PC-9 (cell line): ENCODE measurements at regions of chr3 and their contacts with region 1.

Region 1: DNA sequence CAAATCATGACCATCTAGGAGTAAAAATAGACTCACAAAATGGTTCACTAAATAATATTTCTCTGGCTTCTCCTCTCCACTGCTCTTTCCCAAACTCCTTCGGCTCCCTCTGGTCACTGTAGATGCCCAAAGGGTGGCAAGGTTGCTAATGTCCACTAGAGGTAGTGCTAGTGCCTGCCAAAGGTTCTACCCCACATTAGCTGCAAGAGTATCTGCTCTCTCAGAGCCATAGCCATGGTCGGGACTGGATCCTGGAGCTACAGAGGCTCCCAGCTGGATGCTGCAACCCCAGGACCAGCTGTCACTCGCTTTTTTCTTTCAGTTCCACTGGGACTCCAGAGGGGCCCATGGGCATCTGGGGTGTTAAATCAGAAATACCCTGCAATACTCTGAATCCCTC is 8.5 kb downstream of the HTR3D start:
- DNase-seq: peak in 1 of 2 experiments; percentile 44
- H3K4me3 ChIP-seq: no peak overlapping the region
- H3K27ac ChIP-seq: no peak overlapping the region
- H3K4me1 ChIP-seq: no peaks in the 10 kb centered on the region
- H3K27me3 ChIP-seq: no peaks in the 10 kb centered on the region
- CTCF ChIP-seq: peak; percentile 84

Region 2: DNA sequence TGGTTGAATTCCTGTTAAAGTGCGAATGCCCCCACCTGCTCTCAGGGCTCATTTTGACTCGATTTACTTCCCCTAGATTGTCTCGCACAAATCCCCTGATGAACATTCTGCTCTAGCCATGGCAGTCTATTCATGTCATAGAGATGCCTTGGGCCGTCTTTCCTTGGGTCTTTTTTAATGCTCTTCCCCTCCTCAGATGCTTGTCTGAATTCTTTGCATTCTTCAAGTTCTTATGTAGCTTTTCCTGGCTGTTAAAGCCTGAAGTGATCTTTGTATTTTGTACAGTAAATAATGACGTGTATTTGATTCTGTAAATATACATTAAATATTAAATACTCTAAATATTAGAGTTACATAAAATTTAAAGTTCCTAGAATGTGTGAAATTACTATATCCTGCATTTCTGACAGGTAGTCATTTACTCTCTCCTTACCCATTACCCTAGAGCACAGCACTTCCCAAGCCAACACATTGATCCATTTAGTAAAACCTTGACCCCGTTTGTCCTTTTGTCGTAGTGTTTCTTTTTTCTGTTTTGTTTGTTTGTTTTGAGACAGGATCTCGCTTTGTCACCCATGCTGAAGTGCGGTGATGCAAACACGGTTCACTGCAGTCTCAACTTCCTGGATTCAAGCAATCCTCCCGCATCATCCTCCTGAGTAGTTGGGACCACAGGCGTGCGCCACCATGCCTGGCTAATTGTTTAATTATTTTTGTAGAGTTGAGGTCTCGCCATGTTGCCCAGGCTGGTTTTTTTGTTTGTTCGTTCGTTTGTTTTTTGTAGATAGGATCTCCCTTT is 294.5 kb before region 1 on chr3:
- CTCF ChIA-PET with region 1: no interaction called
- POLR2A ChIA-PET with region 1: no interaction called
- intact Hi-C with region 1: no loop called
- DNase-seq: no peak
- H3K4me3 ChIP-seq: no peak overlapping the region
- H3K27ac ChIP-seq: no peak overlapping the region
- H3K4me1 ChIP-seq: no peaks in the 10 kb centered on the region
- H3K27me3 ChIP-seq: no peaks in the 10 kb centered on the region
- CTCF ChIP-seq: no peak

Region 3: GRCh38 chr3:184050217-184050847 is 10.3 kb after region 1 on chr3:
- CTCF ChIA-PET with region 1: interaction called, 24 read pairs
- POLR2A ChIA-PET with region 1: no interaction called
- intact Hi-C with region 1: no loop called
- DNase-seq: no peak
- H3K4me3 ChIP-seq: no peak overlapping the region
- H3K27ac ChIP-seq: no peak overlapping the region
- H3K4me1 ChIP-seq: no peaks in the 10 kb centered on the region
- H3K27me3 ChIP-seq: no peaks in the 10 kb centered on the region; the same call in 1 of the 2 replicates
- CTCF ChIP-seq: no peak

Region 4: DNA sequence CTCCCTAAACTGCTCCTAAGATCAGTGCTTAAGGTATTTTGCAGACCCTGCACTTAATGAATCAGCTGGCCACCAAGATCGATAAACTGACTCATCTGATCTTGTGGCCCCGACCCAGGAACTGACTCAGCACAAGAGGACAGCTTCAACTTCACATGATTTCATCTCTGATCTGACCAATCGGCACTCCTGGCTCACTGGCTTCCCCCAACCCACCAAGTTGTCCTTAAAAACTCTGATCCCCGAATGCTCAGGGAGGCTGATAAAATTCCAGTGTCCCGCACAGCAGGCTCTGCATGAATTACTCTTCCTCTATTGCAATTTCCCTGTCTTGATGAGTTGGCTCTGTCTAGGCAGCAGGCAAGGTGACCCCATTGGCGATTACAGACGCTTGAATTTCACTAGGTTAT is 70.3 kb after region 1 on chr3:
- CTCF ChIA-PET with region 1: no interaction called
- POLR2A ChIA-PET with region 1: interaction called, 11 read pairs
- intact Hi-C with region 1: loop called (anchors 5 kb)
- DNase-seq: peak in 1 of 2 experiments; percentile 84
- H3K4me3 ChIP-seq: peak overlapping the region; percentile 28; the same call in 1 of the 2 replicates
- H3K27ac ChIP-seq: peak overlapping the region; percentile 47
- H3K4me1 ChIP-seq: peaks cover 16% of the 10 kb centered on the region
- H3K27me3 ChIP-seq: no peaks in the 10 kb centered on the region
- CTCF ChIP-seq: no peak

Region 5: GRCh38 chr3:184117636-184118035 is 77.6 kb after region 1 on chr3:
- CTCF ChIA-PET with region 1: no interaction called
- POLR2A ChIA-PET with region 1: no interaction called
- intact Hi-C with region 1: loop called (anchors 5 kb)
- DNase-seq: no peak
- H3K4me3 ChIP-seq: no peak overlapping the region
- H3K27ac ChIP-seq: no peak overlapping the region
- H3K4me1 ChIP-seq: no peaks in the 10 kb centered on the region
- H3K27me3 ChIP-seq: no peaks in the 10 kb centered on the region
- CTCF ChIP-seq: 0 out of 2 replicates have a peak, but pooled peaks have one; percentile 20

Region 6: DNA sequence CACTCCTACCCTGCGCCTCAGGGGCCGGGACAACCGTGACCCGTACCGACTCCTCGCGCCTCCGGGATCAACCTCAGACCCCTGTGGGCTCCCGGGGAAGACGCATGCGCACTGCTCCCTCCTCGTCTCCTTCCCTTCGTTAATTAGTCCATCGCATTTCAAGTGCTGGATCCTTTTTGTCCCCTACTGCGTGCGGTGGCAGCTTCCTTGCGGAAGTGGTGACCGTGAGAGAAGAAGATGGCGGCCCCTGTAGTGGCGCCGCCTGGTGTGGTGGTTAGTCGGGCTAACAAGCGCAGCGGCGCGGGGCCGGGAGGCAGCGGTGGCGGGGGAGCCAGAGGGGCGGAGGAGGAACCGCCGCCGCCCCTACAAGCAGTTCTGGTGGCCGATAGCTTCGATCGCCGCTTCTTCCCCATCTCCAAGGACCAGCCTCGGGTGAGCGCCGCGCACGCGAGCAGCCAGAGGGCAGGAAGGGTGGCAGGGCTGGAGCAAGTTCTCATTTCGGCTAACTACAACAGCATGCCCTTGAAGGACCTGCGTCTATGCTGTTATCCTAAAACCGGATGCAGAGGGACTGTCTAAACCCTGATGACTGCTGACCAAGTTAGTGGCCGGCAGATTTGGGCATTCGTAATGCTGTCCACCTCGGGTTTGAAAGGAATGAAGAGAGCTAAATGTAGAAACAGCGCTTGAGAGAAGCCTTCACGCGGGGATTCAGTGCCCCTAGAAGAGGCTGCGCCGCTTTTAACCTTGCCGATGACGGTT is 95.3 kb after region 1 on chr3 and contains the start of gene EIF2B5:
- CTCF ChIA-PET with region 1: interaction called, 4 read pairs
- POLR2A ChIA-PET with region 1: no interaction called
- intact Hi-C with region 1: loop called (anchors 1 kb)
- DNase-seq: peak; percentile 87 to 88
- H3K4me3 ChIP-seq: peak within 1 kb of the TSS; percentile 80
- H3K27ac ChIP-seq: peak within 1 kb of the TSS; percentile 79
- H3K4me1 ChIP-seq: peaks cover 25% of the 10 kb centered on the region
- H3K27me3 ChIP-seq: no peaks in the 10 kb centered on the region
- CTCF ChIP-seq: peak; percentile 48
- total RNA-seq, gene EIF2B5: 45.7 and 54.1 TPM in 2 replicates

Region 7: DNA sequence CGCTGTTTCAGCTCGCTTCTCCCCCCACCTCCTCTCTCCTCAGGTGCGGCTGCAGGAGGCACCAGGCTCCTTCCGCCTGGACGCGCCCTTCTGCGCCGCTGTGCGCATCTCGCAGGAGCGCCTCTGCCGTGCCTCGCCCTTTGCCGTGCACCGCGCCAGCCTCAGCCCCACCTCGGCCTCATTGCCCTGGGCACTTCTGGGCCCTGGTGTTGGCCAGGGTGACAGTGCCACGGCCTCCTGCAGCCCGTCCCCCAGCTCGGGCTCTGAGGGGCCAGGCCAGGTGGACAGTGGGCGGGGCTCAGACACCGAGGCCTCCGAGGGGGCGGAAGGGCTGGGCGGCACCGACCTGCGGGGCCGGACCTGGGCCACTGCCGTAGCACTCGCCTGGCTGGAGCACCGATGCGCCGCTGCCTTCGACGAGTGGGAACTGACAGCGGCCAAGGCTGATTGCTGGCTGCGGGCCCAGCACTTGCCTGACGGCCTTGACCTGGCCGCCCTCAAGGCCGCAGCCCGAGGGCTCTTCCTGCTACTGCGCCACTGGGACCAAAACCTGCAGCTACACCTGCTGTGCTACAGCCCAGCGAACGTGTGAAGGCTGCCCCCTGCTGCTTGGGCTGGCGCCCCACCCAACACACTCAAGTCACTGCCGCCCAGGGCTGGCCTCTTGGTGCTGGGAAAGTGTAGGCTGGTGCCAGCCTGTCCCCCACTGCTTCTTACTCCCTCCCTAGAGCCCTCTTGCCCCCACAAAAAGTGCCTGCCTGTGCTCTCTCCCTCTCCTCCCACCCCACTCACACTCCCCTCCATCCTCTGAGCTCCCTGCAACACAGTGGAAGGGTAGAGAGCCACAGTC is 201.7 kb after region 1 on chr3:
- CTCF ChIA-PET with region 1: no interaction called
- POLR2A ChIA-PET with region 1: no interaction called
- intact Hi-C with region 1: loop called (anchors 2 kb)
- DNase-seq: peak; percentile 72 to 94
- H3K4me3 ChIP-seq: no peak overlapping the region; the same call in 1 of the 2 replicates
- H3K27ac ChIP-seq: no peak overlapping the region
- H3K4me1 ChIP-seq: 0 out of 2 replicates have a peak, but pooled peaks cover 7% of the 10 kb centered on the region
- H3K27me3 ChIP-seq: no peaks in the 10 kb centered on the region
- CTCF ChIP-seq: peak; percentile 70

Region 8: DNA sequence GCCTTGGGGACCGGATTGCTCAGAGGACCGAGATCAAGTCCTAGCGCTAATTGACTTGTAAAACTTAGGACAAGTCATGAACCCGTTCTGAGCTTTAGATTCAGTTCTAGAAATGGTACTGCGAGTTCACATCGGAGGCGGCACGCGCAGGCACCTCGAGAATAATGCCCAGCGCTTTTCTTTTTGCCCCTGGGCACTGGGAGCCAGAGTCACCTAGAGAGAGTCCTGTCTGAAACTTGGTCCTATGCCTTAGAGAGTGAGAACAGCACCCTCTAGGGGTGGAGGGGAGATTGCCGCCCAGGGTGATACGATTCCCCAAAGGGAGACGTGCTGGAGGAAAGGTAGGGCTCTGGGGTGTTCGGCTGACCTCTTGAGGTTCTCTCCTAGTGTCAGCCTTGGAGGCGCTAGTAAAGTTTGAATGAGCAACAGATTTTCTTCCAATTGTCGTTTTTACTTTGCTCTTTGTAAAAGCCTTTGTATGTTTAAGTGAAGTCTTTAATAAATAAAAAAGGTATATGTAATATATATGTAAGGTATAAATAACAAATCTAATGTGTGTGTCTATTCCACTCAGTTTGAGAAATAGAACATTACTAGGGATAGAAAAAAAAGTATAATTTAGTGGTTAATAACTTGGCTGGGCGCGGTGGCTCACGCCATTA is 210.3 kb after region 1 on chr3:
- CTCF ChIA-PET with region 1: no interaction called
- POLR2A ChIA-PET with region 1: no interaction called
- intact Hi-C with region 1: loop called (anchors 2 kb)
- DNase-seq: peak; percentile 92 to 97
- H3K4me3 ChIP-seq: peak overlapping the region; percentile 96
- H3K27ac ChIP-seq: peak overlapping the region; percentile 90
- H3K4me1 ChIP-seq: peaks cover 18% of the 10 kb centered on the region
- H3K27me3 ChIP-seq: no peaks in the 10 kb centered on the region
- CTCF ChIP-seq: peak; percentile 97